ENCODE measurements at regions of chr17 and their contacts with region 1.

Region 1: DNA sequence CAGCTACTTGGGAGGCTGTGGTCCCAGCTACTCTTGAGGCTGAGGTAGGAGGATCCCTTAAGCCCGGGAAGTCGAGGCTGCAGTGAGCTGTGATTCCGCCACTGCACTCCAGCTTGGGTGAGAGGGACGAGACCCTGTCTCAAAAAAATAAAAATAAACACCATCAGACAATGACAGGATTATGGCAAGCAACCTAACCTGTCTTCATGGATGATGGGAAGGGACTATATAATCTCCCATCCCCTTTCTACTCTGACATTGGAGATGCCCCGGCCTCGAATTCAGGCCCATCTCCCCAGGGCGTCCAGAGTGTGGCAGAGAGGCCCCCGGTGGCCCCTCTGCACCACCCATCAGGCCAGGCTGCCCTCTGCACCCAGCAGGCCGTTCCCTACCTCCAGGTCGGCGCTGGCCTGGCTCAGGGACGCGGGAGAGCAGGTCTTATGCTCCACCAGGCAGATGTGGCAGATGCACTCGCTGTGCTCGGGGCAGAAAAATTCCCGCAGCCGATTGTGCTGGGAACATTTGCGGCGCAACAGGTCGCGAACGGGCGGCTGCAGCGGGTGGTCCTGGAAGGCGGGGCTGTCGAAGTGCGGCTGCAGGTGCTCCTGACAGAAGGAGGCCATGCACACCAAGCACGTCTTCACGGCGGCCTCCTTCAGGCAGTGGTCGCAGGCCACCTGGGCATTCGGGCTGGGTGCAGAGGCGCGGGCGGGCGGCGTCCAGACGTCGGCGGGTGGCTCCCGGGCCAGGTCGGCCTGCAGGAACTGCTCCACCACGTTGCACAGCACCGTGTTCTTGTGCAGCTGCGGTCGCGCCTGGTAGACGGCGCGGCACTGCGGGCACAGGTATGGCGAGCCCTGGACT is 617 bp downstream of the TRIM25 start:
- DNase-seq: no peak
- H3K4me3 Mint-ChIP-seq: peak overlapping the region; percentile 98
- H3K27ac Mint-ChIP-seq: peak overlapping the region; percentile 86
- H3K4me1 Mint-ChIP-seq: peaks cover 60% of the 10 kb centered on the region
- H3K27me3 Mint-ChIP-seq: no peaks in the 10 kb centered on the region

Region 2: GRCh38 chr17:56890386-56891289 is 22.6 kb before region 1 on chr17:
- CTCF ChIA-PET with region 1: interaction called, 5 read pairs
- POLR2A ChIA-PET with region 1: interaction called, 11 read pairs
- DNase-seq: no peak
- H3K4me3 Mint-ChIP-seq: no peak overlapping the region
- H3K27ac Mint-ChIP-seq: no peak overlapping the region
- H3K4me1 Mint-ChIP-seq: peaks cover 11% of the 10 kb centered on the region
- H3K27me3 Mint-ChIP-seq: no peaks in the 10 kb centered on the region

Region 3: DNA sequence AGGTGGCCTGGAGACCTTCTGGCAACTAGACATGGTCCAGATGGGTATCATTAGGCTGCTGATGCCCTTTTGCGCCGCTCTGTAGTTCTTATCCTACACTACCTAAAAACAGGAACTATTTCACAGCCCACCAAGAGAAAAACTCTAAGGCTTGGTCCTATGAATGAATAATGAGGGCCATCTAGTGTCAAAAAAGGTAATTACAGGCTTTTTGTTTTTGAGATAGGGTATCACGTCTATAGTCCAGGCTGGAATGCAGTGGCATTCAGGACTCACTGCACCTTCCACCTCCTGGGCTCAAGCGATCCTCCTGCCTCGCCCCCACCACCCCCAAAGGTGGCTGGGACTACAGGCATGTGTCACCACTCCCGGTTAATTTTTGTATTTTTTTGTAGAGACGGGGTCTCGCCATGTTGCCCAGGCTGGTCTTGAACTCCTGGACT is 26.7 kb after region 1 on chr17:
- CTCF ChIA-PET with region 1: interaction called, 51 read pairs
- POLR2A ChIA-PET with region 1: interaction called, 4 read pairs
- DNase-seq: no peak
- H3K4me3 Mint-ChIP-seq: no peak overlapping the region
- H3K27ac Mint-ChIP-seq: no peak overlapping the region
- H3K4me1 Mint-ChIP-seq: peaks cover 26% of the 10 kb centered on the region
- H3K27me3 Mint-ChIP-seq: no peaks in the 10 kb centered on the region

Region 4: GRCh38 chr17:57097832-57098421 is 184.7 kb after region 1 on chr17:
- CTCF ChIA-PET with region 1: no interaction called
- POLR2A ChIA-PET with region 1: no interaction called
- DNase-seq: no peak
- H3K4me3 Mint-ChIP-seq: no peak overlapping the region
- H3K27ac Mint-ChIP-seq: no peak overlapping the region
- H3K4me1 Mint-ChIP-seq: peaks cover 8% of the 10 kb centered on the region
- H3K27me3 Mint-ChIP-seq: no peaks in the 10 kb centered on the region

Measured in activated CD4-positive, alpha-beta memory T cell treated with anti-CD3 and anti-CD28 coated beads, Interleukin-2, amount 10 ng/mL, durations not matched to agents 7 days and 5 days (primary cell).